ENCODE measurements at regions of chr15 and their contacts with region 1.

Region 1: GRCh38 chr15:39934397-39935071 is 619 bp downstream of the EIF2AK4 start:
- DNase-seq: peak; percentile 9
- ATAC-seq: peak; percentile 56
- H3K4me3 ChIP-seq: peak overlapping the region; percentile 84 to 88 (median 87)
- H3K27ac ChIP-seq: peak overlapping the region; percentile 68
- H3K4me1 ChIP-seq: peaks cover 40% of the 10 kb centered on the region
- H3K27me3 ChIP-seq: peaks cover 3 to 8% of the 10 kb centered on the region in 2 experiments; a peak in 4 of 5 replicates
- CTCF ChIP-seq: no peak
- EP300 ChIP-seq: 0 out of 4 replicates have a peak, but pooled peaks of 1 of the 2 experiments have one; percentile 1
- POLR2A ChIP-seq: no peak
- RAD21 ChIP-seq: no peak

Region 2: DNA sequence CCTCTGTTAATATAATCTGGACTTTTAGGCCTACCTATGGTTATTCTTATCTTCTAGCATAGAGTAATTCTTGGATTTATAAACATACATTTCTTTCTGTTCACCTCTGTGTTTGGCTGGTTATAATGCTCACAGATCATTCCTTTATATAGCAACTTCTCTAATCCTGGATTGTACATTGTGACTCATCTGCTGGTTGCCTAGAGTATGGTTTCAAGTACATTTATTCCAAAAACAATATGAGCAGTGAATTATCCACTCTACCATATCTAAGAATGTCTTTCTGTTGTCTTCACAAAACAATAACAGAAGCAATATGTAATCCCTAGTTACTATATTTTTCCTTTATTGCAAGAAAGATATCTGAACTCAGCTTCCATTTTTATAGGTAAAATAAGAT is 187.2 kb before region 1 on chr15:
- CTCF ChIA-PET with region 1: no interaction called
- POLR2A ChIA-PET with region 1: no interaction called
- in situ Hi-C with region 1: no loop called
- intact Hi-C with region 1: no loop called
- DNase-seq: no peak
- ATAC-seq: no peak
- H3K4me3 ChIP-seq: no peak overlapping the region
- H3K27ac ChIP-seq: no peak overlapping the region
- H3K4me1 ChIP-seq: no peaks in the 10 kb centered on the region
- H3K27me3 ChIP-seq: no peaks in the 10 kb centered on the region
- CTCF ChIP-seq: no peak
- EP300 ChIP-seq: no peak
- POLR2A ChIP-seq: no peak
- RAD21 ChIP-seq: no peak

Region 3: DNA sequence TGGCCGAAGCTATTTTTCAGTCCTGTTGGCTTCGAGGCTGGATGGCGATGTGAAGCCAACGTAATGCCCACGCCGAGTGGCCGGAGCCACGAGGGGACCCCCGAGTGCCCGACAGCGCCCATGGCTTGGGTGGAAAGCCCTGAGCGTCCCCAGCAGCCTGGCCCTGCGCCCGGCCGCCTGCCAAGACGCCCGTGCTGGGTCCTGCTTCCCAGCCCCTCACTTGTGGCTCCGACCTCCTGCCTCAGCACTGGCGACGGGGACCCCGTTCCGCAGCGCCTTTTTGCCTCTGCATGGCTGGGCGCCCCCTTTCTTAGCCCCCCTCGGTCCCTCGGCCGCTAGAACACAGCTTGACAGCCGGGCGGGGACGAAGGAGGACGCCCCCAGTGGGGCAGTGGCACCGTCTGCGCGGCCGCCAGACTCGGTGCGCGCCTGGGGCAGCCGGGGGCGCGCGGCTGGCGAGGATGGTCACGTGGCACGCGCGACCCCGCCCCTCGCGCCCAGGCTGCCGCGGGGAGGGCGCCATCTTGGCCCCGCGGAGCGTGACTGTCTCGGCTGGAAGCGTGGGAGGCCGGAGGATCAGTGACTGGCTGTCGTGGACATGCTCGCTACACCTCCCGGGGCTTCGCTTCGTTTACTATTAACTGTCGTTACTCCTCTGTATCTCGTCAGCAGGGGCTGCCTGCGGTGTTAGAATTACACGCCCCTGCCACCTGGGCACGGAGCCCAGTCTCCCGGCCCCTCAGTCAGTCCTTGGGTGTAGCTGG is 13.8 kb before region 1 on chr15:
- CTCF ChIA-PET with region 1: no interaction called
- POLR2A ChIA-PET with region 1: interaction called, 15 read pairs
- in situ Hi-C with region 1: no loop called
- intact Hi-C with region 1: no loop called
- DNase-seq: peak; percentile 11
- ATAC-seq: peak; percentile 84
- H3K4me3 ChIP-seq: peak overlapping the region; percentile 54 to 71 (median 60)
- H3K27ac ChIP-seq: no peak overlapping the region
- H3K4me1 ChIP-seq: peaks cover 19% of the 10 kb centered on the region
- H3K27me3 ChIP-seq: peaks cover 2 to 21% of the 10 kb centered on the region in 2 experiments; a peak in 3 of 5 replicates
- CTCF ChIP-seq: peak; percentile 16; the same call in 1 of the 2 replicates
- EP300 ChIP-seq: no peak
- POLR2A ChIP-seq: peak in 1 of 2 experiments; percentile 82; a peak in 2 of 4 replicates
- RAD21 ChIP-seq: peak; percentile 14; the same call in 1 of the 2 replicates

Region 4: GRCh38 chr15:40002295-40002694 is 67.8 kb after region 1 on chr15:
- CTCF ChIA-PET with region 1: no interaction called
- POLR2A ChIA-PET with region 1: interaction called, 27 read pairs
- in situ Hi-C with region 1: no loop called
- intact Hi-C with region 1: loop called (anchors 5 kb)
- DNase-seq: peak; percentile 99
- ATAC-seq: peak; percentile 99
- H3K4me3 ChIP-seq: peak overlapping the region; percentile 52 to 63 (median 57); a peak in 5 of 6 replicates
- H3K27ac ChIP-seq: peak overlapping the region; percentile 89
- H3K4me1 ChIP-seq: peaks cover 57% of the 10 kb centered on the region
- H3K27me3 ChIP-seq: no peaks in the 10 kb centered on the region
- CTCF ChIP-seq: 0 out of 2 replicates have a peak, but pooled peaks have one; percentile 3
- EP300 ChIP-seq: peak in 1 of 2 experiments; percentile 83; a peak in 2 of 4 replicates
- POLR2A ChIP-seq: peak; percentile 47 to 65; a peak in 3 of 4 replicates
- RAD21 ChIP-seq: peak; percentile 24; the same call in 1 of the 2 replicates

Region 5: DNA sequence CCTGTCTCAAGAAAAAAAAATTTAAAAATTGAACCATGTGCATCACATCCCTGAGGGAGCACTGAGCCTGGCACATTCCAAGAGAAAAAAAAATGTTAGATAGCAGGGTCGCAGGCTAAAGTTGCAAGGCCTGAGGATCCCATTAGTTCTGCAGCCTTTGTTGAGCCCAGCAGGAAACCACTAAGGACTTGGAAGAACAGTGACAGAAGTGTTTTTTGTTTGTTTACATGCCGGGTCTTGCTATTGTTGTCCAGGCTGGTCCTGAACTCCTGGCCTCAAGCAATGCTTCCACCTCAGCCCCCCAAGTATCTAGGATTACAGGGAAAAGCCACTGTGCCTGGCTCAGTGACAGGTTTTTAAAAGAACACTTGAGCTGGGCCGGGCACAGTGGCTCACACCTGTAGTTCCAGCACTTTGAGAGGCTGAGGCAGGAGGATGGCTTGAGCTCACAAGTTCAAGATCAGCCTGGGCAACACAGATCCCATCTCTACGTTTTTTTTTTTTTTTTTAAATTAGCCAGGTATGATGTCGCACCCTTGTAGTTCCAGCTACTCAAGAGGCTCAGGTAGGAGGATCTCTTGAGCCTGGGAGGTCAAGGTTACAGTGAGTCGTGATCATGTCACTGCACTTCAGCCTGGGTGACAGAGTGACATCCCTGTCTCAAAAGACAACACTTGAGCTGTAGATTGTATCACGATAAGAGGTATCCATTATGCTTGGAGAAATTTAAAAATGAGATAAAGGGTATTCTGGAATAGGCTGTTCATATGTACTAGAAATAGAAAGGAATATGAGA is 1034.0 kb after region 1 on chr15:
- CTCF ChIA-PET with region 1: no interaction called
- POLR2A ChIA-PET with region 1: no interaction called
- in situ Hi-C with region 1: no loop called
- intact Hi-C with region 1: no loop called
- DNase-seq: no peak
- ATAC-seq: no peak
- H3K4me3 ChIP-seq: no peak overlapping the region
- H3K27ac ChIP-seq: no peak overlapping the region
- H3K4me1 ChIP-seq: no peaks in the 10 kb centered on the region
- H3K27me3 ChIP-seq: peaks cover 1 to 16% of the 10 kb centered on the region in 2 experiments; a peak in 4 of 5 replicates
- CTCF ChIP-seq: no peak
- EP300 ChIP-seq: no peak
- POLR2A ChIP-seq: no peak
- RAD21 ChIP-seq: no peak

Measured in HepG2 (cell line).